Dorsolateral prefrontal cortex (tissue), 120 donors: ENCODE measurements at regions of chr17 and their contacts with region 1.

Region 1: GRCh38 chr17:996554-997344 is at the start of gene TIMM22:
- DNase-seq: peak; percentile 88 to 94 (median 92)
- H3K4me3 ChIP-seq: peak within 1 kb of the TSS; percentile 64 to 100 (median 98)
- H3K27ac ChIP-seq: peak within 1 kb of the TSS; percentile 70 to 99 (median 95)
- H3K27me3 ChIP-seq: no peaks in the 10 kb centered on the region
- CTCF ChIP-seq: peak; percentile 58 to 92 (median 79)
- total RNA-seq, gene TIMM22: 7.3 to 15.5 (median 11.6) TPM

Region 2: DNA sequence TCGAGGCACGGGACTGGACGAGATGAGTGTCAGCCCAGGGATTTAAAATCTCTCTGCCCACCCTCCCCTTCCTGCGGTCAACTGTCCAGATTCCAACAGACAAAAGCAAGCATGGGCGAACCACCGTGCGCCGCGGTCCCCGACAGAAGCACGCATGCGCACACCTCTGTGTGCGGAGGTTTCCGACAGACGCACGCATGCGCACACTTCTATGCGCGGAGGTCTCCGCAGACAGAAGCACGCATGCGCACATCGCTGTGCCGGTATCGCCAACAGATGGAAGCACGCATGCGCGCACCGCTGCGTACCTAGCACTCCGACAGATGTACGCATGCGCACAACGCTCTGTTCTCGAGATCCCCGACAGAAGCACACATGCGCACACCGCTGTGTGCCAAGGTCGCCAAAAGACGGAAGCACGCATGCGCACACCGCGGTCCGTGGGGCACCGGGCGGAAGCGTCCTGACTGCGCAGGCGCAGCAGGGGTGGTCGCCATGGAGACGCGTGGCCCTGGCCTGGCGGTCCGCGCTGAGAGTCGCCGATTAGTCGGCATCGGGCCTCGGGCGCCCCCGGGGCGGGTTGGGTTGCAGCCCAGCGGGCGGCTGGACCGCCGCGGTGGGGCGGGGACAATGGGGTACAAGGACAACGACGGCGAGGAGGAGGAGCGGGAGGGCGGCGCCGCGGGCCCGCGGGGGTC is 586.8 kb before region 1 on chr17:
- intact Hi-C with region 1: loop called in 1 of 2 experiments (anchors 5 kb)
- DNase-seq: peak; percentile 93 to 97 (median 95)
- H3K4me3 ChIP-seq: peak overlapping the region; percentile 55 to 98 (median 87)
- H3K27ac ChIP-seq: peak overlapping the region; percentile 18 to 96 (median 81)
- H3K27me3 ChIP-seq: no peaks in the 10 kb centered on the region
- CTCF ChIP-seq: peak in 29 of 56 donors; percentile 5 to 58 (median 25)

Region 3: GRCh38 chr17:705863-706262 is 290.9 kb before region 1 on chr17:
- intact Hi-C with region 1: loop called in 1 of 2 experiments (anchors 5 kb)
- DNase-seq: no peak
- H3K4me3 ChIP-seq: no peak overlapping the region
- H3K27ac ChIP-seq: no peak overlapping the region
- H3K27me3 ChIP-seq: no peaks in the 10 kb centered on the region
- CTCF ChIP-seq: no peak

Region 4: DNA sequence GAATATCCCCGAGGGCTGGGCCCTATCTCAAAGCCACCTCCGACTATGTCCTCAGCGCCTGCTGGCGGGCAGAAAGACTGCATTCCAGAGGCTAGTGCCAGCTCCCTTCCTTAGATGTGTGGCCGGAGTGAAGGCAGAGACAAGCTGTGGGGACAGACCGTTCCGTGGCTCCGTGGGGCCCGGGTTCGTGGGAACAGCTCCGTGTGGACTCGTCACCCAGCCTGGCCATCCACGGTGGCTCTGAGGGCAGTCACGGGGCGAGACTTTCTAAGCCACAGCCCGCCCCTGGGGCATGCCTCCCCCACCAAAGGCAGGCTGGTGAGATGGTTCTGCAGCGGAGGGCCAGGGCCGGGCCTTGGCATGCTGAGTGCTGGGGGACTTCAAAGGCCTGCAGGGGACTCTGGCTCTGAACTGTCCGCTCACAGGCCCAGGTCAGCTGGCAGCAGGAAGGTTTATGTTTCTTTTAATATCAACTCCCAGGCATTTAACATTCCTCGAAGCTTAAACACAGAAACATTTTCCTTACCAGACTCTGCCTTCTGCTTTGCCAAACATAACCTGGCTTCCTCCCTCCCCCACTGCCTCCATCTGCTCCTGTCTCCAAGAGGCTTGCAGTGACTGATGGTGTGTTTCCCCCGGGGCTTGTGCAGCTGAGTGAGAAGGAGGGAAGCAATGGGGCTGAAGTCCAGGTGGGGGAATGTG is 50.6 kb after region 1 on chr17:
- intact Hi-C with region 1: loop called in 1 of 2 experiments (anchors 5 kb)
- DNase-seq: peak in 5 of 10 donors; percentile 44 to 77 (median 71)
- H3K4me3 ChIP-seq: no peak overlapping the region
- H3K27ac ChIP-seq: peak overlapping the region in 56 of 59 donors; percentile 26 to 91 (median 70)
- H3K27me3 ChIP-seq: peaks cover 0 to 17% (median 0%) of the 10 kb centered on the region in 45 donors
- CTCF ChIP-seq: peak in 2 of 56 donors; percentile 12 to 16